Tibial artery (tissue), 4 donors: ENCODE measurements at regions of chr18 and their contacts with region 1.

Region 1: GRCh38 chr18:21315741-21316187 is 73.7 kb downstream of the GREB1L start:
- DNase-seq: no peak
- H3K4me3 ChIP-seq: no peak overlapping the region
- H3K27ac ChIP-seq: no peak overlapping the region
- H3K4me1 ChIP-seq: peaks cover 0 to 13% (median 6%) of the 10 kb centered on the region in 4 donors
- H3K27me3 ChIP-seq: no peaks in the 10 kb centered on the region
- CTCF ChIP-seq: no peak

Region 2: DNA sequence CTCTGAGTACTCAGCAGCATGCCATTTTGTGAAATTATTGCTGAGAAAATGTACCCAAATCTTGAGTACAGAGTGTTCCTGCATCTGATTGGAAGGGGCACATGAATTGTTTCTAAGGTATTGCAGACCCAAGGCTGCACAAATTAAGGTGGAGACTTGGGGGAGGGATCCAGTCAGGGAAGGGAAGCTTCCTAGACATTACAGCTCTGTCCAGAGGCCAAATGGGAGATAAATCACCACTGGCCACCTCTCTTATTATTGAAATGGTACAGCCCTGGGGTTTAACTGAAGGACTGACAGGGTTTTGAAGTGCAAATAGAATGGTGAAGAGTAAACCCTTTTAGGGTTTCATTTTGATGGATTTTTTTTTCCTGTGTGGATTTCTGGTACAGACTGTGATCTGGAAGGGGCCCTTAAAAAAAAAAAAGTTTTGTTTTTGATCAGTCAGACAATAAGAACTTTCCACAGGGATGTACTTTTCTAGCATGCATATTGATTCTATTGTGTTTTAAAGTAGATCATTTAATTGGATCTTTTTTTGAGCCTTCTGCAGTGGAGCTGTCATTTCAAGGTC is 45.6 kb after region 1 on chr18:
- intact Hi-C with region 1: loop called (anchors 10 kb)
- DNase-seq: no peak
- H3K4me3 ChIP-seq: no peak overlapping the region
- H3K27ac ChIP-seq: peak overlapping the region; percentile 23 to 40
- H3K4me1 ChIP-seq: peaks cover 0 to 21% (median 0%) of the 10 kb centered on the region in 4 donors
- H3K27me3 ChIP-seq: no peaks in the 10 kb centered on the region
- CTCF ChIP-seq: no peak

Region 3: DNA sequence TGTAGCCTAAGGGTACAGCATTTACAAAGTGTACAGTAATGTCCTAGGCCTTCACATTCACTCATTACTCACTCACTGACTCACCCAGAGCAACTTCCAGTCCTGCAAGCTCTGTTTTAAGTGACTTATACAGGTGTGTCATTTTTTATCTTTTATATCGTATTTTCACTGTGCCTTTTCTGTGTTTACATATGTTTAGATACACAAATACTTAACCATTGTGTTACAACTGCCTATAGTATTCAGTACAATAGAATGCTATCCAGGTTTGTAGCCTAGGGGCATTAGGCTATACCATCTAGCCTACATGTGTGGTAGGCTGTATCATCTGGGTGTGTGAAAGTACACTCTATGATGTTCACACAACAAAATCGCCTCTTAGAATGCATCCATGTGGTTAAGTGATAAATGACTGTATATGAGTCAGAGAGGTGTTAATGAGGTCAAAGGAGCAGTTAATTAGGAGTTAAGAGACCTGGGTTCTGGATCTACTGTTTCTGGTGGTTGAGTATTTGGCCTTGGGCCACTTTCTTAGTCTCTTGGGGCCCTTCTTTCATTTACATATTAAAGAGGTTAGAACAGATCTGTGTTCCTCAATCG is 75.4 kb after region 1 on chr18:
- intact Hi-C with region 1: no loop called
- DNase-seq: no peak
- H3K4me3 ChIP-seq: no peak overlapping the region
- H3K27ac ChIP-seq: no peak overlapping the region
- H3K4me1 ChIP-seq: peaks cover 0 to 19% (median 2%) of the 10 kb centered on the region in 4 donors
- H3K27me3 ChIP-seq: no peaks in the 10 kb centered on the region
- CTCF ChIP-seq: no peak